Activated B cell treated with CpG ODN at 0.5 μM for 24 hours (primary cell): ENCODE measurements at regions of chr16 and their contacts with region 1.

Region 1: DNA sequence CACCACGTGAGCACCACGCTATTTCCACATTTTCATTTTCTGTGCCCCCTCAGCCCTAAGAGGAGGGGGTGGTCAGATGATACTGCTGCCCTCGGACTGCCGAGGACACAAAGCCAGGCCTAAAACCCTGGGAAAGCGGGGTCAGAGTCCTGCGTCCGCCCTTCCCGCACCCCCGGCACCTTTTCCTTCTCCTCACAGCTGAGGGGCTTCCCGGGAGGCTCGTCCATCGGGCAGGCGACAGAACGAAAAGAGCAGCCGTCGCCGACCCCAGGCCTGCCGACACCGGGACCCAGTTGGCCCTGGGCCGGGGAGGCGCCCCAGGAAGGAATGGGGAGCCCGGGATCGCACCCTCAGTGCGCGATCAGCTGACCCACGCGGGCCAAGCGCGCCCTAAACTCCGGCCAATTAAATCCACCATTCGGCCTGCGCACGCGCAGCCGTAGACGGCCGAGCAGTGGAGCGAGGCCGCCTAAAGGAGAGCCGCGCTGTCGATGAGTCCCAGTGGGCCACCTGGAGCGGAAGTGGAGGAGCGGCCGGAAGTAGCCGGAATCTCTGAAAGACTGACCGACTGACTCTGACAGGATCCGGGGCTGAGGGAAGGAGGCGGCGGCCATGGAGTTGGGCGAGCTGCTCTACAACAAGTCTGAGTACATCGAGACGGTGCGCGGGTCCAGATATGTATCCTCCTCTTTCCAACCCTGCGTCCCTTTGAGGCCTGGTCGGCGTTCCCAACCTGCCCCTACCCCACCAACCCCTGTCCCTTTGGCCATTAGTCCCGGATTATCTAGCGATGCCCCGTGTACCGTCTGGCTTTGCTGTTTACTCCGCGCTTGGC is at the starts of genes DCTN5 and PALB2:
- DNase-seq: peak; percentile 81
- ATAC-seq: peak; percentile 94
- H3K4me3 Mint-ChIP-seq: peak within 1 kb of the TSS; percentile 98
- H3K27ac Mint-ChIP-seq: peak within 1 kb of the TSS; percentile 97
- H3K4me1 Mint-ChIP-seq: peaks cover 37% of the 10 kb centered on the region
- H3K27me3 Mint-ChIP-seq: no peaks in the 10 kb centered on the region
- CTCF ChIP-seq: no peak
- total RNA-seq, gene DCTN5: 62.8 and 64.1 TPM in 2 replicates
- total RNA-seq, gene PALB2: 16.0 and 19.8 TPM in 2 replicates

Region 2: DNA sequence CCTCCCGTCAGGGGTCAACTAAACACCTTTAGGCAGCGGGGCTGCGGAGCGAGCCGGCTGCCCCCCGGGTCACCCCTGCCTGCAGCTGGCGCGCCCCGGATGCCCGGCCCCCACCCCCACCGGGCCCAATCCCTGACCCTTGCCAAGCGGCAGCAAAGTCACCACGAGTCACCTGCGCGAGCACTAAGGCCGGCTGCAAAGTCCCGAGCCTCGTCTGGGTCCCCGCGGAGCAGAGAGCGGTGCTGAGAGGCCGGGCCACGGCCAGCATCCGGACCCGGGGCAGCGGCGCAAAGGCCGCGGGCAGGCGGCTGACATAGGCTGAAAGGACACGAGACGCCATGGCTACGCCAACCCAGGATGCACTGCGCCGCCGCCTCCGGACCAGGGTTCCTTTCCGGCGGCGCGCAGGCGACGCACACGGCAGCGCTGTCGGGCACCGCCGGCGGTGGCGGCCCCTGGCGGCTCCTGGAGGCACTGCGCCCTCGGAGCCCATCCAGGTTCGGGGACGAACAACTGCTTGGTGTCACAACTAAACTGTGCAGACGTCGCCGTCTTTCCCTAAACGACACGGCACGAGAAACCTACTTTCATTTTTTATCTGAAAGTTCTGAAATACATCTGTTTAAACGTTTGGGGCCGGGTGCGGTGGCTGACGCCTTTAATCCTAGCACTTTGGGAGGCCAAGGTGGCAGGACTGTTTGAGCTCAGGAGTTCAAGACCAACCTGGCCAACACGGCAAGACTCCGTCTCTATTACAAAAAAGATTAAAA is 45.0 kb before region 1 on chr16 and contains the start of gene NDUFAB1:
- CTCF ChIA-PET with region 1: interaction called, 3 read pairs
- POLR2A ChIA-PET with region 1: interaction called, 5 read pairs
- intact Hi-C with region 1: loop called (anchors 1 kb)
- DNase-seq: peak; percentile 95
- ATAC-seq: peak; percentile 99
- H3K4me3 Mint-ChIP-seq: peak within 1 kb of the TSS; percentile 88
- H3K27ac Mint-ChIP-seq: peak within 1 kb of the TSS; percentile 65
- H3K4me1 Mint-ChIP-seq: peaks cover 28% of the 10 kb centered on the region
- H3K27me3 Mint-ChIP-seq: no peaks in the 10 kb centered on the region
- CTCF ChIP-seq: peak; percentile 89
- total RNA-seq, gene NDUFAB1: 68.4 and 74.5 TPM in 2 replicates

Region 3: GRCh38 chr16:23678430-23679273 is 37.5 kb after region 1 on chr16 and contains the start of gene PLK1:
- CTCF ChIA-PET with region 1: no interaction called
- POLR2A ChIA-PET with region 1: interaction called, 3 read pairs
- intact Hi-C with region 1: loop called (anchors 1 kb)
- DNase-seq: peak; percentile 54
- ATAC-seq: peak; percentile 93
- H3K4me3 Mint-ChIP-seq: peak within 1 kb of the TSS; percentile 85
- H3K27ac Mint-ChIP-seq: no peak within 1 kb of the TSS
- H3K4me1 Mint-ChIP-seq: peaks cover 17% of the 10 kb centered on the region
- H3K27me3 Mint-ChIP-seq: no peaks in the 10 kb centered on the region
- CTCF ChIP-seq: no peak
- total RNA-seq, gene PLK1: 2.3 and 3.9 TPM in 2 replicates

Region 4: DNA sequence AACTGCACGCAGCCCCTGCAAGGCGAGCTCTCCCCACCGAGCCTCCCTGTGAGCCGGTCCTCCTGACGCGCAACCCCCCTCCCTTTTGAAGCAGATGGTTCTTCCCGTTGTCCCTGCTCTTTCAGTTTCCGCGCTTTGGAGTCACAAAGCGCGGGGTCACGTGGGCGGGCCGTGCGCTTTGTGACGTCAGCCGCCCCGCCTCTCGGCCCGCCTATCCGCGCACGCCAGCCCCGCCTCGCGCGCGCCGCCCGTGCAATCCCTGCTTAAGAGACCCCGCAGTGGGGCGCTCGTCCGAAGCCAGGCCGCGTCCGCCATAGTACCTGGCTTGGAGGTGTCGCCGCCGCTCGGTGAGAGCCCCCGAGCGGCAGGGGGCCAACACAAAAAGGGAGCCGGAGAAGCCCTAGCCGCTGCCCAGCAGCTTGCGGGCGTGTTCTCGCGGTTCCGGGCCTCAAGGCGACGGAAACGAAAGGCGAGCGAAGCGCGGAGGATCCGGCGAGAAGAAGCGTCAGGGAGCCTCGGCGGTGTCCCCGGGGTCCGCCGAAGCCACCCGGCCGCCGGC is 898.2 kb after region 1 on chr16 and contains the start of gene RBBP6:
- CTCF ChIA-PET with region 1: no interaction called
- POLR2A ChIA-PET with region 1: no interaction called
- intact Hi-C with region 1: loop called (anchors 1 kb)
- DNase-seq: peak; percentile 96
- ATAC-seq: peak; percentile 92
- H3K4me3 Mint-ChIP-seq: peak within 1 kb of the TSS; percentile 100
- H3K27ac Mint-ChIP-seq: peak within 1 kb of the TSS; percentile 100
- H3K4me1 Mint-ChIP-seq: peaks cover 43% of the 10 kb centered on the region
- H3K27me3 Mint-ChIP-seq: no peaks in the 10 kb centered on the region
- CTCF ChIP-seq: no peak
- total RNA-seq, gene RBBP6: 85.3 and 85.8 TPM in 2 replicates